ENCODE measurements at regions of chr13 and their contacts with region 1.

Region 1: DNA sequence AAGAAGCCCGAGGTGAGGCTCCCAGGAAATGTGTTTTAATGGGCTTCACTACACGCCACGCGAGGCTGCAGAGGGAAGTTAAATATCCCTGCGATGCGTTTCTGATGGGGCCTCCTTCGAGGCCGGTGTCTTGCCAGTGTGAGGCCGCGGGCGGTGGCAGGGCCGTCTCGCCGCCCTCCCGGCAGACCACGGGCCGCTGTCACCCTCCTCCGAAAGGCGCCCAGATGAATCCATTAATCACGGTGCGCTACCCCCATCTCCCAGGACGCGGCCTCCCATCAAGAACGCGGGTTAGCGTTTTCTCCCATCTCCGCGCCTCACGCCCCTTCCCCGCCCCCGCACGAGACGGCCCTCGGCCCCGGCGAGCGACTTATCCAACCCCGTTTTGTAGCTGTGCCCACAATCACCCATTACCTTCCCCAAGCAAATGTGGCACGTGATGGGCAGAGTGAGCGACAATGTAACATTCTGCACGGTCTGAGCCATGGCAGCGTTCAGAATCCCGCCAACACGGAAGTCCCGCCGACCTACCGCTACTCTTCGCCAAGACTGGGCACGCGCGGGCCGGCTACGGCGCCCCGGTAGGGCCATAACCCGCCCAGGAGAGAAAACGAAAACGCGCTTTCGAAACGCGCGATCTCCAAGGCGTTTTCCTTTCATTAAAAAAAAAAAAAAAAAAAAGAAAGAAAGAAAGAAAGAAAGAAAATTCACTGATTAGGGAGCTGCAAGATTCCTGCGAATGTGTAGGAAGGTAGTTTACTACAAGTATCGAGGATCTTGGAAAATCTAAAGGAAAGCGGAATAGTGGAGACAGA is at the start of gene OBI1:
- DNase-seq: peak; percentile 83 to 94 (median 87)
- ATAC-seq: peak; percentile 94
- H3K4me3 ChIP-seq: peak within 1 kb of the TSS; percentile 96
- H3K4me3 Mint-ChIP-seq: peak within 1 kb of the TSS; percentile 98
- H3K27ac ChIP-seq: peak within 1 kb of the TSS in 1 of 2 donors; percentile 56
- H3K27ac Mint-ChIP-seq: peak within 1 kb of the TSS; percentile 91
- H3K4me1 ChIP-seq: peaks cover 14% of the 10 kb centered on the region
- H3K4me1 Mint-ChIP-seq: peaks cover 43% of the 10 kb centered on the region
- H3K27me3 ChIP-seq: no peaks in the 10 kb centered on the region
- H3K27me3 Mint-ChIP-seq: no peaks in the 10 kb centered on the region
- CTCF ChIP-seq: no peak
- total RNA-seq, gene OBI1: 2.6 TPM

Region 2: GRCh38 chr13:77345150-77345780 is 1313.6 kb before region 1 on chr13:
- CTCF ChIA-PET with region 1: no interaction called
- POLR2A ChIA-PET with region 1: no interaction called
- intact Hi-C with region 1: loop called in 1 of 2 experiments (anchors 10 kb)
- DNase-seq: peak in 3 of 14 experiments; percentile 33 to 56 (median 54)
- ATAC-seq: peak; percentile 71
- H3K4me3 ChIP-seq: no peak overlapping the region
- H3K4me3 Mint-ChIP-seq: peak overlapping the region; percentile 42
- H3K27ac ChIP-seq: no peak overlapping the region
- H3K27ac Mint-ChIP-seq: peak overlapping the region; percentile 65
- H3K4me1 ChIP-seq: peaks cover 3% of the 10 kb centered on the region
- H3K4me1 Mint-ChIP-seq: peaks cover 28% of the 10 kb centered on the region
- H3K27me3 ChIP-seq: no peaks in the 10 kb centered on the region
- H3K27me3 Mint-ChIP-seq: no peaks in the 10 kb centered on the region
- CTCF ChIP-seq: no peak

Region 3: GRCh38 chr13:78609464-78610205 is 49.2 kb before region 1 on chr13:
- CTCF ChIA-PET with region 1: no interaction called
- POLR2A ChIA-PET with region 1: interaction called, 3 read pairs
- intact Hi-C with region 1: loop called (anchors 5 kb)
- DNase-seq: no peak
- ATAC-seq: no peak
- H3K4me3 ChIP-seq: peak overlapping the region; percentile 46
- H3K4me3 Mint-ChIP-seq: peak overlapping the region; percentile 77
- H3K27ac ChIP-seq: no peak overlapping the region
- H3K27ac Mint-ChIP-seq: no peak overlapping the region
- H3K4me1 ChIP-seq: peaks cover 39% of the 10 kb centered on the region
- H3K4me1 Mint-ChIP-seq: peaks cover 23% of the 10 kb centered on the region
- H3K27me3 ChIP-seq: peaks cover 57 to 58% of the 10 kb centered on the region in 2 experiments
- H3K27me3 Mint-ChIP-seq: peaks cover 59% of the 10 kb centered on the region
- CTCF ChIP-seq: no peak

Region 4: DNA sequence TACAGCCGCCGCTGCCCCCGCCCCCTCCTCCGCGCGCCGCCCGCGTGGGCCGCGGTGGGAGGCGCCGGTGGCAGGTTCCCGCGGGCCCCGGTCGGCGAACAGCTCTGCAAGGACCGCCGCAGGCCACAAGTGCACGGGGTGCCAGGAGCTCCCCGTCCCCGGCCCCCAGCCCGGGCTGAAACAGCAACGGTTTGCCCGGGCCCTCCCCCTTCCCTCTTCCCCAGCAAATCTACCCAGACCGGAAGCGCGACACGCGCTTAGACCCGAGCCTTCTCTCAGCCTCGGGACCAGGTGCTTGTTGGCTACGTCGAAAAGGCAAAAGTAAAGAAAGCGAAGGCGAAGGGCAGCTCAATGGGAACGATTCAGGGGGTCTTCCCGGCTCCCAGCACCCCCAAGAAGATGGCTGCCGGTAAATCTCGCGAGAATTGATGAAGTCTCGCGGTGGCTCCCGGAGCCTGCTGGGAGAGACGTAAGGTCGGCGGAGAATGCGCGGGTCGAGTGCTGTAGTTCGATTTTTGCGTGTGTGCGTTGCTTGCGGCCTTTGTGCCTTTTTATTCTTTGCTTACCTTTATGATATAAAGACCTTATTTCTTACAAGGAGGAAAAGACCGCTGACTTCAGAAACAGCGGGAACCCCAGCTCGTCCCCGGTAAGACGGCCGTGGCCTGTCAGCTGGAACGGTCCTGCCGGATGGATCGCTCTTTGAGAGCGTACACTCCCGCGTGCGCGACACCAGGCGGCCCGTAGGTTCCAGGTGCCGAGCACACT is 747.2 kb after region 1 on chr13 and contains the start of gene RBM26:
- CTCF ChIA-PET with region 1: no interaction called
- POLR2A ChIA-PET with region 1: interaction called, 4 read pairs
- intact Hi-C with region 1: loop called in 1 of 2 experiments (anchors 5 kb)
- DNase-seq: peak; percentile 87 to 97 (median 92)
- ATAC-seq: peak; percentile 86
- H3K4me3 ChIP-seq: peak within 1 kb of the TSS; percentile 68
- H3K4me3 Mint-ChIP-seq: peak within 1 kb of the TSS; percentile 95
- H3K27ac ChIP-seq: peak within 1 kb of the TSS; percentile 93 to 95
- H3K27ac Mint-ChIP-seq: no peak within 1 kb of the TSS
- H3K4me1 ChIP-seq: peaks cover 21% of the 10 kb centered on the region
- H3K4me1 Mint-ChIP-seq: peaks cover 44% of the 10 kb centered on the region
- H3K27me3 ChIP-seq: no peaks in the 10 kb centered on the region
- H3K27me3 Mint-ChIP-seq: no peaks in the 10 kb centered on the region
- CTCF ChIP-seq: no peak
- total RNA-seq, gene RBM26: 67.3 to 68.0 TPM

Region 5: DNA sequence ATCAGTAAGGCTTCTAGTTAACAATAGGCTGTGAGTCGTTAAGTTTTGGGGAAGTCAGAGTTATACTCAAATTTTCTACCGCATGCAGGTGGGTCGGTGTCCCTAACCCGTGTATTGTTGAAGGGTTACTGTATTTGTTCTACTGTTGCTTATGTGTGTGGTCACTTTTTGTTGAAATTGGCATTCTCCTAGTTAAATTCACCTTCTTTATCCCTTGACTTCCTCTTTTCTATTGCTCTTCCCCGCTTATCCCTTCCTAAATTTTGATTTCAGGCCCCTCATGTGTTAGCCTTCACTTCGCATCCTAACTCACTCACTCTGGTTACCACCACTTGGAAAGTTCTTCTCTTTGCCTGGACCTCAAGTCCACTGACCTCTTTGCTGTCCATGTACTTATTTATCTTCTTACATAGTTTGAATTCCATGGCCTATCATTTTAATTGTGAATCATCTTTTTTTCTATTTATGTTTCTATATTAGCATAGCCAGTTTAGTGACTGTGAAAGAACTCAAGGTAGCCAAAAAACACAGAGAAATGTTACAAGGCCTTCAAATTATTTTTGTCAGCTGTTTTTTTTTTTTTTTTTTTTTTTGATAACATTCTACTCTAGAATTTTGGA is 875.0 kb after region 1 on chr13:
- CTCF ChIA-PET with region 1: no interaction called
- POLR2A ChIA-PET with region 1: no interaction called
- intact Hi-C with region 1: loop called in 1 of 2 experiments (anchors 10 kb)
- DNase-seq: no peak
- ATAC-seq: no peak
- H3K4me3 ChIP-seq: no peak overlapping the region
- H3K4me3 Mint-ChIP-seq: no peak overlapping the region
- H3K27ac ChIP-seq: no peak overlapping the region
- H3K27ac Mint-ChIP-seq: no peak overlapping the region
- H3K4me1 ChIP-seq: no peaks in the 10 kb centered on the region
- H3K4me1 Mint-ChIP-seq: peaks cover 20% of the 10 kb centered on the region
- H3K27me3 ChIP-seq: no peaks in the 10 kb centered on the region
- H3K27me3 Mint-ChIP-seq: no peaks in the 10 kb centered on the region
- CTCF ChIP-seq: no peak